AG04449 (cell line): ENCODE measurements at regions of chr18 and their contacts with region 1.

Region 1: DNA sequence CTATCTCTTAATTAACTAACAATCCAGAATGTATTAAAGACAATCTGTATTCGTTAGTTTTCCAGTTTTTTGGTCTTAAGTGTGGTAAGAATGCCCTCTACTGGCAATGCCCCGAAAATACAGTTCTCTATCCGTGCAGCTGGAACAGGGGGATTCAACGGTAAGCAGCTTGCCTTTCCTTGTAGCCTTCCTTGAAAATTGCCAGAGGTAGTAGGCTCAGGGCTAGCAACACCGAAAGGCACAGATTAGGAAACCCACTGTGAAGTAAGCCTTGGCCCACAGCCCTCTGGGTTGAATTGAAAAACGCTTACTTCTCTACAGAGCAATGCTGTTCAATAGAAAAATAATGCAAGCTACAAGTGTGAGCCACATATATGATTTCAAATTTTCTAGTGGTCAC is 17.1 kb upstream of the VPS4B start:
- DNase-seq: no peak
- H3K4me3 ChIP-seq: no peak overlapping the region
- CTCF ChIP-seq: peak; percentile 69

Region 2: DNA sequence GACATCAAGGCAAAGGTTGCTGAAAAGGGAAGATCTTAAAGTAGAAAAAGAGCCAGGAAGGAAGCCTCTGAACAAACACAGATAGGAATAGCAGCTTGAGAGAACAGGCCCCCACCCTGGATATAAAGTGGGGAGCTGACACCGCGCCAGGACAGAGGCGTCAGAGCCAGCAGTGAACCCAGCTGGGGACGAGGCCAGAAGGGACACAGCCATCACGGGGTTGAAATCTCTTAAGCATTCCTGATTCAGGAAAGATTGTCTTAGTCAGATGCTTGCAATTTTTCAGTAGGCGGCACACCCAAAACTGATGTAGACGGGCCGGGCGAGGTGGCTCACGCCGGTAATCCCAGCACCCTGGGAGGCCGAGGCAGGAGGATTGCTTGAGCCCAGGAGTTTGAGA is 817.8 kb before region 1 on chr18:
- CTCF ChIA-PET with region 1: no interaction called
- POLR2A ChIA-PET with region 1: no interaction called
- DNase-seq: no peak
- H3K4me3 ChIP-seq: no peak overlapping the region
- CTCF ChIP-seq: no peak

Region 3: GRCh38 chr18:63016270-63016669 is 423.1 kb before region 1 on chr18:
- CTCF ChIA-PET with region 1: interaction called, 125 read pairs
- POLR2A ChIA-PET with region 1: no interaction called
- DNase-seq: peak; percentile 3
- H3K4me3 ChIP-seq: no peak overlapping the region
- CTCF ChIP-seq: peak; percentile 63

Region 4: DNA sequence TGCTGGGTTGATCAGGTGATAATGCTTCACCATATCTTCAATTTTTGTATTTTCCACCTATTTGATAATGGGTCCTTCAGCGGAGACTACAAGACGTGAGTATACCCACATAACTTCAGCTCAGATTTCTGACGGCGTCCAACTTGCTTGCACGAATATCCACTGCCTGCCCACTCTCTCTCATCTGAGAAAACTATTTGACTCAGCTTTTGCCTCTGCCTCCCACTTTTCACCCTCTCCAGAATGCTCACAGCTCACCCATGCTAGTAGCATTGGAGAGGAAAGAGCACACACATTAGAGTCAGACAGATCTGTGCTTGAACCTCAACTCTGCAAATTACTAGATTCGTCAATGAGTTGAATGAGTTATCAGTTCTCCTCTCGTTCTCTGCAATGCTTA is 286.5 kb before region 1 on chr18:
- CTCF ChIA-PET with region 1: no interaction called
- POLR2A ChIA-PET with region 1: no interaction called
- DNase-seq: no peak
- H3K4me3 ChIP-seq: no peak overlapping the region
- CTCF ChIP-seq: no peak

Region 5: DNA sequence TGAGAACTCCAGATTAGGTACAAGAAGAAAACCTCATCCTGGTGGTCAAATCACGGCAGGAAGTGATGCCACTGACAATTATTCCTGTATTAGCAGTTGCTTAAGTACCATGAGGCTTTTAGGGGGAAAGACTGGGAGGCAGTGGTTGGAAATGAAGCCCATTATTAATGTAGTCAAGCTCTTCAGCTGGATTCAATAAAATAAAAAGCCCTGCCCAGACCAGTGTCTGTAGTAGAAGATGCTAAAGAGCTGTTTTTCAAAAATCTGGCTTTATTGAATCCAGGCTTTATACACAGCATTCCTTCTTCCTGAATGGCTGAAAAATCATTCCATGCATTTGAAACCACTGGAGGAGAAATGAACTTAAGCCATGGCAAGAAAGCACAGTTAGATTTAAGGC is 274.9 kb before region 1 on chr18:
- CTCF ChIA-PET with region 1: no interaction called
- POLR2A ChIA-PET with region 1: no interaction called
- DNase-seq: no peak
- H3K4me3 ChIP-seq: no peak overlapping the region
- CTCF ChIP-seq: no peak

Region 6: GRCh38 chr18:63320046-63320689 is 119.2 kb before region 1 on chr18:
- CTCF ChIA-PET with region 1: interaction called, 14 read pairs
- POLR2A ChIA-PET with region 1: no interaction called
- DNase-seq: no peak
- H3K4me3 ChIP-seq: peak overlapping the region; percentile 76
- CTCF ChIP-seq: no peak

Region 7: GRCh38 chr18:63339920-63340484 is 99.3 kb before region 1 on chr18:
- CTCF ChIA-PET with region 1: interaction called, 70 read pairs
- POLR2A ChIA-PET with region 1: no interaction called
- DNase-seq: no peak
- H3K4me3 ChIP-seq: no peak overlapping the region
- CTCF ChIP-seq: peak; percentile 31

Region 8: GRCh38 chr18:63422810-63423304 is 16.5 kb before region 1 on chr18:
- CTCF ChIA-PET with region 1: interaction called, 46 read pairs
- POLR2A ChIA-PET with region 1: interaction called, 3 read pairs
- DNase-seq: no peak
- H3K4me3 ChIP-seq: peak overlapping the region; percentile 77
- CTCF ChIP-seq: peak; percentile 10

Region 9: DNA sequence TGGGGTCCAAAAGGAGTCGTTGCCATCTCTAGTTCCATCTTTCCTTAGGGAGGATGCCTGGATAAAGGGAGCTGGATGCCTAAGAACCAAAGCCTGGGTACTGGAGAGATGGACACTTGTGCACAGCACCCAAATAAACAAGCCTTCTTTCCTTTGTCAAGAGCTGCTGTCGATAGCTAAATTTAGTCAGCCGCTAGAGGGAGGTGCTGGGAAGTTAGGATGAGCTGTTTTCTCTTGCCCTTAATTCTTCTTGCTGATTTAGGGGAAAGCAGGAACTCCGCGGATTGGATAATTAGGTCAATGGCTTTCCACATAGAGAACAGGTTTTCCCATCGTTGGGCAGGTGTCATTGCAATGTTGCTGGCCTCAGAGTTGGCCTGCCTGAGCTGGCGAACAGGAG is 72.0 kb after region 1 on chr18:
- CTCF ChIA-PET with region 1: interaction called, 10 read pairs
- POLR2A ChIA-PET with region 1: no interaction called
- DNase-seq: no peak
- H3K4me3 ChIP-seq: no peak overlapping the region
- CTCF ChIP-seq: peak; percentile 73

Region 10: DNA sequence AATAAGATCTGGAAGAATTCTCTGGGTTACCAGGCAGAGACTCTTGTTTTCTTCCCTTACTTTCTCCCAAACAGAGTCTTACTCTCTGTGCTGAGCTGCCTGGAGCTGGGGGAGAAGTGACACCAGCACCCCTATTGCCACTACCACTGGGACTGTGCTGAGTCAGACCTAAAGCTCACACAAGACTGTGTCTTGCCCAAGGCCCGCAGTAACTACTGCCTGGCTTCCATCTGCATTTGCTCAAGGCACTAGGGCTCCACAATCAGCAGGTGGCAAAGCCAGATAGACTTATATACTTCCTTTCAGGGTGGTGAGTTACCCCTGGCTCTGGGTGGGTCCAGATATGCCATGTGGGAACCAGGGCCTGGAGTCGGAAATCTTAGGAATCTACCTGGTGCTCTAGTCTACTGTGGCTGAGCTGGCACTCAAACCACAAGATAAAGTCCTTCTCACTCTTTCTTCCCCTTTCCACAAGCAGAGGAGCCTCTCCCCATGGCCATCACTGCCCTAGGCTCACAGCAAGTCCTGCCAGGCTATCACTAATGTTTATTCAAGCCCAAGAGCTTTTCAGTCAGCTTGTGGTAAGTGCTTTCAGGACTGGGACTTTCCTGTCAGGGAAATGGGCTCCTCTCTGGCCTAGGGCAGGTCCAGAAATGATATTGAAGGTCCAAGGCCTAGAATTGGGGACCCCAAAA is 420.6 kb after region 1 on chr18:
- CTCF ChIA-PET with region 1: no interaction called
- POLR2A ChIA-PET with region 1: no interaction called
- DNase-seq: no peak
- H3K4me3 ChIP-seq: no peak overlapping the region
- CTCF ChIP-seq: no peak